ENCODE measurements at regions of chr5 and their contacts with region 1.

Region 1: GRCh38 chr5:79020861-79021561 is 35.9 kb upstream of the ARSB start:
- DNase-seq: peak; percentile 40 to 65 (median 65)
- ATAC-seq: peak; percentile 60 to 75 (median 72)
- H3K4me3 ChIP-seq: no peak overlapping the region
- H3K27ac ChIP-seq: no peak overlapping the region
- H3K4me1 ChIP-seq: peaks cover 0 to 26% (median 12%) of the 10 kb centered on the region in 4 donors
- H3K27me3 ChIP-seq: no peaks in the 10 kb centered on the region
- CTCF ChIP-seq: peak; percentile 67 to 84 (median 82)
- POLR2A ChIP-seq: no peak

Region 2: GRCh38 chr5:79109527-79110492 is 88.8 kb after region 1 on chr5:
- intact Hi-C with region 1: loop called in 1 of 2 experiments (anchors 5 kb)
- DNase-seq: peak in 2 of 3 donors; percentile 39 to 75
- ATAC-seq: peak; percentile 47 to 60 (median 58)
- H3K4me3 ChIP-seq: no peak overlapping the region
- H3K27ac ChIP-seq: peak overlapping the region in 1 of 3 donors; percentile 86
- H3K4me1 ChIP-seq: peaks cover 0 to 42% (median 16%) of the 10 kb centered on the region in 4 donors
- H3K27me3 ChIP-seq: no peaks in the 10 kb centered on the region
- CTCF ChIP-seq: peak; percentile 68 to 90 (median 78)
- POLR2A ChIP-seq: no peak

Region 3: DNA sequence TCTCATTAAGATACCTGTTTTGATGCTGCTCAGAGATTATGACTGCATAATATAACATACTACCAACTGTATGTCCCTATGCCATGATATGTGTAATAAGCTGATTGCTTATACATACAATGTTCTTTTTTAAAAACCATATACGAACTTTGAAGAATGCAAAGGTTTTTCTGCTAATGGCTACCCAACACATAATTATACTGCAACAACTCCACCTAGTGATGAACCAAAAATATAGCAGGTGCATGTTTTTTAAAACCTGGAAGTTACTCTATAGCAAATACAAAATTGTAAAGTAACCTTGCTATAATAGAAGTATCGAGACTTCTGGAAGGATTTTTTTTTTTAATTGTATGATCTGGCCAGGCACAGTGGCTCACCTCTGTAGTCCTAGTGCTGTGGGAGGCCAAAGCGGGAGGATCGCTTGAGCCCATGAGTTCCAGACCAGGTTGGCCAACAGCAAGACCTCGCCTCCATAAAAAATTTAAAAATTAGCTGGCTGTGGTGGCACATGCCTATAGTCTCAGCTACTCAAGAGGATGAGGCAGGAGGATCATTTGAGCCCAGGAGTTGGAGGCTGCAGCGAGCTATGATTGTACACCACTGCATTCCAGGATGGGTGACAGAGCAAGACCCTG is 443.8 kb after region 1 on chr5:
- intact Hi-C with region 1: loop called in 1 of 2 experiments (anchors 10 kb)
- DNase-seq: no peak
- ATAC-seq: peak; percentile 67 to 74 (median 73)
- H3K4me3 ChIP-seq: no peak overlapping the region
- H3K27ac ChIP-seq: no peak overlapping the region
- H3K4me1 ChIP-seq: no peaks in the 10 kb centered on the region
- H3K27me3 ChIP-seq: no peaks in the 10 kb centered on the region
- CTCF ChIP-seq: peak; percentile 60 to 74 (median 64)
- POLR2A ChIP-seq: no peak

Region 4: DNA sequence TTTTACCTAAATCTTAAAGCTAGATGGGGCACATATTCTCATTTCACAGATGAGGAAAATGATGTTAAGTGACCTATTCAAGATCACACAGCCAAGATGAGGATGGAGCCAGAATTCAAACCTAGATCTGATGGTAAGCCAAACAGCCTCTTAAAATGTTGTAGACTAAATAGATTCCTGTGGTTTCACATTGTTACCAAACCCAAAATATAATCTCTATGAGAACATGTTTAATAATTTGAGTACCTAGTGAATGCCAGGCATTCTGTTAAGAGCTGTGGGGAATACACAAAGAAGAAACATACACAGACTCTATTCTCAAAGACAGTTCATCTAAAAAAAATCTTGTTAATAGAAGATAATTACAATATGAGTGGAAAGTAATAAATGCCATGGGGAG is 467.8 kb after region 1 on chr5:
- intact Hi-C with region 1: no loop called
- DNase-seq: no peak
- ATAC-seq: no peak
- H3K4me3 ChIP-seq: no peak overlapping the region
- H3K27ac ChIP-seq: no peak overlapping the region
- H3K4me1 ChIP-seq: no peaks in the 10 kb centered on the region
- H3K27me3 ChIP-seq: no peaks in the 10 kb centered on the region
- CTCF ChIP-seq: no peak
- POLR2A ChIP-seq: no peak

Measured in right lobe of liver (tissue), 6 donors.